Panc1 (cell line): ENCODE measurements at regions of chr22 and their contacts with region 1.

Region 1: DNA sequence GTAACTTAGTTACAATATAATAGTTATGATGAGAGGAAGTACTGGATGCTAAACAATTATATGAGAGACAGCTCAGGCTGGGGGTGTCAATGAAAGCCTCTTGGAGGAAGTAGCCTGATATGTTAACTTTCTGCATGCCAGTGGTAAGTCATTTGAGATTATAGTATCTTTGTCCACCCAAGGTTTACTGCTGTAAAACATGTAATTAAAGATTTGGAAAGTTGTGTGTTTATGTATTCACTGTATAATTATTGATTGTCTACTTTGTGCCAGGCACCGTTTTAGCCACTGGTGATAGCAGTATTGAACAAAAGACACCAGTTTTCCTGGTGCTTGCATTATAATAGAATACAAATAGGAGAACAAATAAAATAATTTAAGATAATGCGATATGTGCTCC is 624 bp upstream of the DNAJB7 start:
- DNase-seq: no peak
- ATAC-seq: no peak
- H3K4me3 ChIP-seq: no peak overlapping the region
- H3K27ac ChIP-seq: no peak overlapping the region
- H3K4me1 ChIP-seq: peaks cover 6% of the 10 kb centered on the region
- H3K27me3 ChIP-seq: no peaks in the 10 kb centered on the region
- CTCF ChIP-seq: no peak

Region 2: GRCh38 chr22:40409125-40410113 is 453.1 kb before region 1 on chr22:
- CTCF ChIA-PET with region 1: no interaction called
- POLR2A ChIA-PET with region 1: interaction called, 17 read pairs
- in situ Hi-C with region 1: no loop called
- intact Hi-C with region 1: no loop called
- DNase-seq: no peak
- ATAC-seq: no peak
- H3K4me3 ChIP-seq: no peak overlapping the region
- H3K27ac ChIP-seq: no peak overlapping the region
- H3K4me1 ChIP-seq: no peaks in the 10 kb centered on the region
- H3K27me3 ChIP-seq: no peaks in the 10 kb centered on the region
- CTCF ChIP-seq: no peak

Region 3: GRCh38 chr22:40533712-40534378 is 328.7 kb before region 1 on chr22:
- CTCF ChIA-PET with region 1: no interaction called
- POLR2A ChIA-PET with region 1: no interaction called
- in situ Hi-C with region 1: no loop called
- intact Hi-C with region 1: no loop called
- DNase-seq: no peak
- ATAC-seq: peak; percentile 78
- H3K4me3 ChIP-seq: peak overlapping the region; percentile 33 to 45
- H3K27ac ChIP-seq: peak overlapping the region; percentile 94
- H3K4me1 ChIP-seq: peaks cover 43% of the 10 kb centered on the region
- H3K27me3 ChIP-seq: no peaks in the 10 kb centered on the region
- CTCF ChIP-seq: no peak